ENCODE measurements at regions of chr3 and their contacts with region 1.

Region 1: DNA sequence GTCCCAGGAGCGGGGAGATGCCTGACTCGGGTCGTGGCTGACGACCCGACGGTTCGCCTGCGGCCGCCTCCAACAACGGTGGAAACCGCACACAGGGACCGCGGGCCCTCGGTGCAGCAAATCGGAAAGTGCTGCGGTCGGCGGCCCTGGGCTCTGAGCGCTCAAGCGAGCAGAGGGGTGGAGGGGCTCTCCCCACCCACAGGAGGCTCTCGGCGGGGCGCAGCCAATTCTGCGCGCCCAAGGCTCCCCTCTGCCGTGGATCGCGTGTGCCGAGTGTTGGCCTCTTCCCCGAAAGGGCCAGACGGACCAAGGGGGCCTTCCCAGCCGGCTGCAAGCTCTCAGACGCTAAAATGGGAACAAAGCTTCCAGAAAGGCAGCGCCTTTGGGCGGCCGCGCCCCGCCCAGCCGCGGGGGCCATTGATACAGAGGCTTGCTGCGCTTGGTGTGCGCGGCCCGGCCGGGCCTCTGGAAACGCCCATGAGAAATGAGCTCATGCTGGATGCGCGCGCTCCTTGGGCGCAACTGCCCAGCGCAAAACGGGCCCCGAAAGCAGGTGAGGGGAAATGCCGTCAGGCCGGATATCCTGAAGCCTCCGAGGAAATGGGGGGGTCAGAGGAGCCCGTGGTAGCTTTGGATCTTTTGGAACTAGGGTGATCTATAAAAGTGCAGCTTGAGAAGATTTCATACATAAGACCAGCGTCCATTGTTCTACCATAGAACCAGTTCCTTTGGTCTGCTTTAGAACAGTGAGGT is 1.2 kb upstream of the GSK3B start:
- DNase-seq: peak; percentile 94
- H3K4me3 Mint-ChIP-seq: no peak overlapping the region
- H3K27ac Mint-ChIP-seq: no peak overlapping the region
- H3K4me1 Mint-ChIP-seq: peaks cover 13% of the 10 kb centered on the region
- H3K27me3 Mint-ChIP-seq: no peaks in the 10 kb centered on the region
- CTCF ChIP-seq: no peak

Region 2: GRCh38 chr3:119498186-119498987 is 597.0 kb before region 1 on chr3 and contains the start of gene TIMMDC1:
- CTCF ChIA-PET with region 1: no interaction called
- POLR2A ChIA-PET with region 1: interaction called, 15 read pairs
- intact Hi-C with region 1: no loop called
- DNase-seq: peak; percentile 98
- H3K4me3 Mint-ChIP-seq: peak within 1 kb of the TSS; percentile 99
- H3K27ac Mint-ChIP-seq: peak within 1 kb of the TSS; percentile 98
- H3K4me1 Mint-ChIP-seq: peaks cover 16% of the 10 kb centered on the region
- H3K27me3 Mint-ChIP-seq: no peaks in the 10 kb centered on the region
- CTCF ChIP-seq: no peak
- total RNA-seq, gene TIMMDC1: 108 and 113 TPM in 2 replicates

Region 3: GRCh38 chr3:119973289-119973688 is 122.1 kb before region 1 on chr3:
- CTCF ChIA-PET with region 1: no interaction called
- POLR2A ChIA-PET with region 1: interaction called, 7 read pairs
- intact Hi-C with region 1: loop called (anchors 5 kb)
- DNase-seq: peak; percentile 45
- H3K4me3 Mint-ChIP-seq: no peak overlapping the region
- H3K27ac Mint-ChIP-seq: peak overlapping the region; percentile 28
- H3K4me1 Mint-ChIP-seq: peaks cover 17% of the 10 kb centered on the region
- H3K27me3 Mint-ChIP-seq: no peaks in the 10 kb centered on the region
- CTCF ChIP-seq: no peak

Region 4: GRCh38 chr3:120129718-120130513 is 34.5 kb after region 1 on chr3:
- CTCF ChIA-PET with region 1: no interaction called
- POLR2A ChIA-PET with region 1: interaction called, 24 read pairs
- intact Hi-C with region 1: no loop called
- DNase-seq: no peak
- H3K4me3 Mint-ChIP-seq: no peak overlapping the region
- H3K27ac Mint-ChIP-seq: no peak overlapping the region
- H3K4me1 Mint-ChIP-seq: no peaks in the 10 kb centered on the region
- H3K27me3 Mint-ChIP-seq: no peaks in the 10 kb centered on the region
- CTCF ChIP-seq: no peak

Region 5: GRCh38 chr3:120160050-120160449 is 64.6 kb after region 1 on chr3:
- CTCF ChIA-PET with region 1: interaction called, 8 read pairs
- POLR2A ChIA-PET with region 1: interaction called, 71 read pairs
- intact Hi-C with region 1: loop called (anchors 1 kb)
- DNase-seq: peak; percentile 99
- H3K4me3 Mint-ChIP-seq: no peak overlapping the region
- H3K27ac Mint-ChIP-seq: peak overlapping the region; percentile 96
- H3K4me1 Mint-ChIP-seq: peaks cover 32% of the 10 kb centered on the region
- H3K27me3 Mint-ChIP-seq: no peaks in the 10 kb centered on the region
- CTCF ChIP-seq: no peak

Region 6: GRCh38 chr3:120182724-120183524 is 87.5 kb after region 1 on chr3:
- CTCF ChIA-PET with region 1: interaction called, 11 read pairs
- POLR2A ChIA-PET with region 1: interaction called, 174 read pairs
- intact Hi-C with region 1: loop called (anchors 1 kb)
- DNase-seq: peak; percentile 80
- H3K4me3 Mint-ChIP-seq: no peak overlapping the region
- H3K27ac Mint-ChIP-seq: peak overlapping the region; percentile 83
- H3K4me1 Mint-ChIP-seq: peaks cover 27% of the 10 kb centered on the region
- H3K27me3 Mint-ChIP-seq: no peaks in the 10 kb centered on the region
- CTCF ChIP-seq: peak; percentile 42